ENCODE measurements at regions of chr17 and their contacts with region 1.

Region 1: GRCh38 chr17:20263595-20263994 is 203.7 kb downstream of the LGALS9B start:
- DNase-seq: no peak
- ATAC-seq: no peak
- H3K4me3 ChIP-seq: no peak overlapping the region
- H3K4me3 Mint-ChIP-seq: peak overlapping the region in 5 of 10 donors; percentile 15 to 75 (median 47)
- H3K27ac ChIP-seq: no peak overlapping the region
- H3K27ac Mint-ChIP-seq: peak overlapping the region in 8 of 9 donors; percentile 36 to 96 (median 80)
- H3K4me1 ChIP-seq: peaks cover 4 to 47% of the 10 kb centered on the region in 2 donors
- H3K4me1 Mint-ChIP-seq: peaks cover 27 to 90% (median 79%) of the 10 kb centered on the region in 7 donors
- H3K27me3 ChIP-seq: no peaks in the 10 kb centered on the region
- H3K27me3 Mint-ChIP-seq: no peaks in the 10 kb centered on the region

Region 2: GRCh38 chr17:20085283-20085845 is 178.2 kb before region 1 on chr17:
- CTCF ChIA-PET with region 1: no interaction called
- POLR2A ChIA-PET with region 1: no interaction called
- intact Hi-C with region 1: no loop called
- DNase-seq: no peak
- ATAC-seq: no peak
- H3K4me3 ChIP-seq: no peak overlapping the region
- H3K4me3 Mint-ChIP-seq: no peak overlapping the region
- H3K27ac ChIP-seq: no peak overlapping the region
- H3K27ac Mint-ChIP-seq: no peak overlapping the region
- H3K4me1 ChIP-seq: no peaks in the 10 kb centered on the region
- H3K4me1 Mint-ChIP-seq: peaks cover 0 to 13% (median 2%) of the 10 kb centered on the region in 7 donors
- H3K27me3 ChIP-seq: no peaks in the 10 kb centered on the region
- H3K27me3 Mint-ChIP-seq: peaks cover 0 to 9% (median 4%) of the 10 kb centered on the region in 5 donors

Region 3: GRCh38 chr17:20276421-20276820 is 12.8 kb after region 1 on chr17:
- CTCF ChIA-PET with region 1: interaction called, 3 read pairs
- POLR2A ChIA-PET with region 1: interaction called, 6 read pairs
- intact Hi-C with region 1: loop called in 1 of 2 experiments (anchors 1 kb)
- DNase-seq: peak in 1 of 9 donors; percentile 23
- ATAC-seq: peak; percentile 19
- H3K4me3 ChIP-seq: no peak overlapping the region
- H3K4me3 Mint-ChIP-seq: peak overlapping the region; percentile 59 to 86 (median 72)
- H3K27ac ChIP-seq: peak overlapping the region; percentile 68
- H3K27ac Mint-ChIP-seq: peak overlapping the region; percentile 56 to 98 (median 95)
- H3K4me1 ChIP-seq: peaks cover under 1 to 69% of the 10 kb centered on the region in 2 donors
- H3K4me1 Mint-ChIP-seq: peaks cover 57 to 99% (median 93%) of the 10 kb centered on the region in 7 donors
- H3K27me3 ChIP-seq: no peaks in the 10 kb centered on the region
- H3K27me3 Mint-ChIP-seq: no peaks in the 10 kb centered on the region